WTC11 (cell line): ENCODE measurements at regions of chr19 and their contacts with region 1.

Region 1: DNA sequence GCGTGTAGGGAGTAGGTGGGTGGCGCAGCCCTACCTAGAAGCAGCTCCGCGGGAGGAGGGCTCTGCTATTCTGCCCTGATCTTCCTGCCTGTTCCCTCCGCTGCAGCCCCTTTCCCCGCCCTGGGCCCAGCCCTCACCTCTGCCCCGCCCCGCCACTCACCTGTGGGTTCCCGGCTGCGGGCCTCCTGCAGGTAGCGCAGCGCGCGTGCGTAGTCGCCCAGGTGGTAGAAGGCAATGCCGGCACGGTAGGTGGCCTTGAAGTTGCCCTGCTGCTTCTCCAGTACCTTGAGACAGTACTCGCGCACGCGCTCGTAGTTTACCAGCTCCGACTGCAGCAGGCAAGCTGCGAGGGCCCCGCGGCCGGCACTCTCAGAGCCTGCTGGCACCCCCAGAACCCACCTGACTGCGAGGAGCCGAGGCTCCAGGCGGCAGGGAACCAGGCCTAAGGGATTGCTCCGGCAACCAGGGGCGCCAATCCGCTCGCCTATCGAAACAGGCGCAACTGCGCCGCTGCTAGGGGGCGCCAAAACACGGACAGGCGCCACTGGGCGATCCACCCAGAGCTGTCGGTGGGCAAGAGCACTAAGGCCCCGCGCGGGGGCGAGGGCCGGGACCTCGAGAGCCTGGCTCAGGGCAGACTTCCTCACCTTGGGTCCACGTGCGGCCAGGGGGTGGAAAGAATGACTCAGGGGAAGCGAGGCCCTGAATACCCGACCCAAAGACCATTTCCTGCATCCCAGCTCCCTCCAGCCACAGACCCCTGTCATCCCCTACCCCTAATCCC is 965 bp downstream of the TTC9B start:
- DNase-seq: peak; percentile 82
- ATAC-seq: peak; percentile 60
- H3K4me3 Mint-ChIP-seq: peak overlapping the region; percentile 50
- H3K27ac Mint-ChIP-seq: no peak overlapping the region
- H3K4me1 Mint-ChIP-seq: peaks cover 11% of the 10 kb centered on the region
- H3K27me3 Mint-ChIP-seq: peaks cover 44% of the 10 kb centered on the region
- CTCF ChIP-seq: peak; percentile 65

Region 2: DNA sequence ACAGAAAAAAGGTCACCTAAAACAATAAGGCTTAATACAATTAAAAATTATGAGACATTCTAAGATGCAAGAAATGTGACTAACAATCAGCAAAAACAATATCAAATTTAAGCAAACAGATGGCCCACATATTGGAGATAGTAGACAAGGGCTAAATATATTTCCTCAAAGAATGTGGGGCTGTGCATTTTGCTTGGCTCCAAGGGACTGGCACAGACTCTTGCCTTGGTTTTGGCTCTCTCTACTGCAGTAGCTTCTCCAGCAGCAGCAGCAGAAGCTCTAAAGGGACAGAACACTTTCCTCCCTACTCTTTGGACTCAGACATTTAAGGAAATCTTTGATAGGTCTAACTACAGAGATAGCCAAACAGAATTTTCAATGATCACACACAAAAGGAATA is 88.2 kb before region 1 on chr19:
- CTCF ChIA-PET with region 1: no interaction called
- POLR2A ChIA-PET with region 1: no interaction called
- DNase-seq: no peak
- ATAC-seq: no peak
- H3K4me3 Mint-ChIP-seq: no peak overlapping the region
- H3K27ac Mint-ChIP-seq: no peak overlapping the region
- H3K4me1 Mint-ChIP-seq: no peaks in the 10 kb centered on the region
- H3K27me3 Mint-ChIP-seq: peaks cover 26% of the 10 kb centered on the region
- CTCF ChIP-seq: no peak

Region 3: GRCh38 chr19:40139533-40140287 is 77.5 kb before region 1 on chr19:
- CTCF ChIA-PET with region 1: interaction called, 32 read pairs
- POLR2A ChIA-PET with region 1: no interaction called
- DNase-seq: no peak
- ATAC-seq: no peak; the same call in 1 of the 2 replicates
- H3K4me3 Mint-ChIP-seq: no peak overlapping the region
- H3K27ac Mint-ChIP-seq: no peak overlapping the region
- H3K4me1 Mint-ChIP-seq: 0 out of 2 replicates have a peak, but pooled peaks cover 5% of the 10 kb centered on the region
- H3K27me3 Mint-ChIP-seq: peaks cover 2% of the 10 kb centered on the region; the same call in 1 of the 2 replicates
- CTCF ChIP-seq: no peak

Region 4: GRCh38 chr19:40165362-40165937 is 51.8 kb before region 1 on chr19:
- CTCF ChIA-PET with region 1: interaction called, 47 read pairs
- POLR2A ChIA-PET with region 1: no interaction called
- DNase-seq: peak; percentile 90
- ATAC-seq: peak; percentile 99
- H3K4me3 Mint-ChIP-seq: no peak overlapping the region
- H3K27ac Mint-ChIP-seq: 0 out of 2 replicates have a peak overlapping the region, but pooled peaks have one; percentile 78
- H3K4me1 Mint-ChIP-seq: peaks cover 4% of the 10 kb centered on the region
- H3K27me3 Mint-ChIP-seq: no peaks in the 10 kb centered on the region; the same call in 1 of the 2 replicates
- CTCF ChIP-seq: peak; percentile 79

Region 5: GRCh38 chr19:40200341-40201099 is 16.7 kb before region 1 on chr19:
- CTCF ChIA-PET with region 1: interaction called, 26 read pairs
- POLR2A ChIA-PET with region 1: no interaction called
- DNase-seq: no peak
- ATAC-seq: no peak
- H3K4me3 Mint-ChIP-seq: no peak overlapping the region
- H3K27ac Mint-ChIP-seq: no peak overlapping the region
- H3K4me1 Mint-ChIP-seq: no peaks in the 10 kb centered on the region
- H3K27me3 Mint-ChIP-seq: no peaks in the 10 kb centered on the region
- CTCF ChIP-seq: no peak

Region 6: DNA sequence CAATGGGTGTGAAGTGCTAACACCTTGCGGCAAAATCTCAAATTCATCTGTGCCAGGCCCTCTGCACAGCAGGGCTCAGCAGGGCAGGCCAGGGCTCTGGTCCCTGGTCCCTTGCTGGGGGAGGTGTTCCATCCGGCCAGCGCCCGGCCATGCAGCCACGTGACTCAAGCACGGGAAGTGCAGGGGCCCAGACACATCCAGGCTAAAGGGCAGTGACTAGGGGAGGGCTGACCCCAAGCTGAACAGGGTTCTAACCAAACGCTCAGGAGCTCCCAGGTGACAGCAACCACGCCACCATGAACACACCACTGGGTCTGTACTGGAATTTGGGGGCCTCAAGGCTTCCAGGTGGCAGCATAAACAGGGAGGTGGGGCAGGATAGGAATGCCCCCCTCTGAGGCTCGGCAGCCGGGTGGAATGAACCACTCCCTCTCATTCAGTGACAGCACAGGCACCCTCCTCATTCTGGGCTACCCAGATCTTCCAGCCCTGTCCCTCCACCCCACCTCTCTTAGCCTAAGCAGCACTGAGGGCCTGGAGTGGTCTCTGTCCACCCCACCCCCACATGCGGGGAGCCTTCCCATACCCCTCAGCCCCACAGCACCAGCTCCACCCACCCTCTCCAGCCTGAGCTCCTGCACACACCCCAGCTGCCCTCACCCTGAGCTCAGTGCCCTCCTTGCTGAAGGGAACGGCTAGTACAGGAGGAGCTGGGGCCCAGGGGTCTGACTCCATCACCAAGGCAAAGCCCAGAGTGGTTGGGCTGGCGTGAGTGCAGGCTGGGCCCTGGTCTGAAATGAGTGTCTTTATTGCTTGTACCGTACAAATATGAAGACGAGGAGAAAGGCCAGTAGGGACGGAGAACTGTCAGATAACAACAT is 14.6 kb after region 1 on chr19:
- CTCF ChIA-PET with region 1: interaction called, 28 read pairs
- POLR2A ChIA-PET with region 1: no interaction called
- DNase-seq: peak; percentile 56
- ATAC-seq: peak; percentile 73
- H3K4me3 Mint-ChIP-seq: 0 out of 2 replicates have a peak overlapping the region, but pooled peaks have one; percentile 10
- H3K27ac Mint-ChIP-seq: peak overlapping the region; percentile 92
- H3K4me1 Mint-ChIP-seq: peaks cover 33% of the 10 kb centered on the region
- H3K27me3 Mint-ChIP-seq: peaks cover 16% of the 10 kb centered on the region
- CTCF ChIP-seq: no peak

Region 7: DNA sequence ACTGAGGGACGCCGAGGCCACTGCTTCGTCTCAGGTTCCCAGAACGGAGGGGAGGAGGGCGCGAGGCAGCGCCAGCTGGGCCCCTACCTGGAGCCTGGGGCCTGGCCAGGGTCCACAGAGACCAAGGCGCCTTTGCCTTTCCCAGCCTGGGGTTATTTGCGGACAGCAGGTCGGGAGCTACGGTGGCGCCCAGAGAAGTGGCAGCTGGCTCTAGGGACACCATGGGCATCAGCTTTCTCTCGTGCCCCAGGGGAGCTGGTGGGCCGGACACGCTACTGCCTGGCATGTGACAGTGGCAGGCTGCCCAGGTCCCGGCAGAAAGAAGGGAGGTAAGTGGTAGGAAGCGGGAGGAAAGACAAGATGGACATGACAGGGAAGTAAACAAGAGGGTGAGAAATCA is 48.9 kb after region 1 on chr19:
- CTCF ChIA-PET with region 1: interaction called, 23 read pairs
- POLR2A ChIA-PET with region 1: no interaction called
- DNase-seq: no peak
- ATAC-seq: no peak
- H3K4me3 Mint-ChIP-seq: no peak overlapping the region
- H3K27ac Mint-ChIP-seq: no peak overlapping the region; the same call in 1 of the 2 replicates
- H3K4me1 Mint-ChIP-seq: peaks cover 20% of the 10 kb centered on the region
- H3K27me3 Mint-ChIP-seq: no peaks in the 10 kb centered on the region
- CTCF ChIP-seq: no peak

Region 8: GRCh38 chr19:40305403-40305802 is 88.2 kb after region 1 on chr19:
- CTCF ChIA-PET with region 1: interaction called, 16 read pairs
- POLR2A ChIA-PET with region 1: no interaction called
- DNase-seq: peak; percentile 81
- ATAC-seq: peak; percentile 65
- H3K4me3 Mint-ChIP-seq: no peak overlapping the region
- H3K27ac Mint-ChIP-seq: peak overlapping the region; percentile 3; the same call in 1 of the 2 replicates
- H3K4me1 Mint-ChIP-seq: peaks cover 12% of the 10 kb centered on the region
- H3K27me3 Mint-ChIP-seq: no peaks in the 10 kb centered on the region
- CTCF ChIP-seq: peak; percentile 46; the same call in 1 of the 2 replicates